Heart right ventricle (tissue), 16 donors: ENCODE measurements at regions of chr6 and their contacts with region 1.

Region 1: DNA sequence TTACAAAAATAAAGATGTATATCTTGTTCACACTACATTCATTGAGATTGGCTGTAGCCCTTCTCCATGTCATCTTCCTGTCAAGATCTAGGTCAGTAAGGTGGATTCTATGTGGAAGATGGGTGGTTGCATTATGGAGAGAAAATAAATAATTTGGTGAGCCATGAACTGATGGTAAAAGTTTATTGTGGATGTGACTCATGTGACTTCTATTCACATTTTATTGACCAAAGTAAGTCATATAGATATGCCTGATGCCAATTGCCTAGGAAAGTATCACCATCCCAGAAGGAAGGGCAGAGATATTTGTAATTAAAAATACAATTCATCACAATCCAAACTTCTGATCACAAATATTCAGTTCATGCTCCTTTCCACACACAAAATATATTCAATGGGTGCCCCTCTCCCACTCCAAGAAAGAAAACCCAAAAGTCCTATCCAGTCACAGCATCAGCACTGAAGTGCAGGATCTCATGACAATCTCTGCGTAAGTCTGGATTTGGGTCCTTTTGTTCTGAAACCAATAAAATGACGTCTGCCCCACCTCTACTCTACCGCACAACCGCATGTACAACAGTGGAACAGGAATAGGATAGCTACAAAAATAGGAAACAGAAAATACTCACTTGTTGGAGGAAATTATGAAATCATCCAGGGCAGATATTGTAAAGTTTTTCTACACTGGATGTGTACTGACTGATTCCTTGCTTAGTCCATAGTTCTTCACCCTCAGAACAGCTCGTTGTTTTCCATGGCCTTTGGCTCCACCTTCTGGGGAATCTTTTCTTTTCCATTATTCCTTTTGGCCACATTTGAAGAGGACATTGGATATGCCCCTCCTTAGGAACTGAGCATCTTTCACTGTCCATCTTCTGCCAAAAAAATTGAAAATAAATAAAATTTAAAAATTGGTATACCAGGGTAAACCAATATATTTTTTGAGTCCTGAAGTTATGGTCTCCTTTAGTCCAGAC is 16.1 kb upstream of the SLC17A3 start:
- DNase-seq: peak in 1 of 2 donors; percentile 26
- ATAC-seq: peak in 4 of 8 donors; percentile 28 to 69 (median 56)
- H3K4me3 ChIP-seq: no peak overlapping the region
- H3K27ac ChIP-seq: no peak overlapping the region
- H3K4me1 ChIP-seq: no peaks in the 10 kb centered on the region
- H3K27me3 ChIP-seq: peaks cover 0 to 2% (median 0%) of the 10 kb centered on the region in 7 donors
- CTCF ChIP-seq: peak in 8 of 9 donors; percentile 14 to 67 (median 48)

Region 2: DNA sequence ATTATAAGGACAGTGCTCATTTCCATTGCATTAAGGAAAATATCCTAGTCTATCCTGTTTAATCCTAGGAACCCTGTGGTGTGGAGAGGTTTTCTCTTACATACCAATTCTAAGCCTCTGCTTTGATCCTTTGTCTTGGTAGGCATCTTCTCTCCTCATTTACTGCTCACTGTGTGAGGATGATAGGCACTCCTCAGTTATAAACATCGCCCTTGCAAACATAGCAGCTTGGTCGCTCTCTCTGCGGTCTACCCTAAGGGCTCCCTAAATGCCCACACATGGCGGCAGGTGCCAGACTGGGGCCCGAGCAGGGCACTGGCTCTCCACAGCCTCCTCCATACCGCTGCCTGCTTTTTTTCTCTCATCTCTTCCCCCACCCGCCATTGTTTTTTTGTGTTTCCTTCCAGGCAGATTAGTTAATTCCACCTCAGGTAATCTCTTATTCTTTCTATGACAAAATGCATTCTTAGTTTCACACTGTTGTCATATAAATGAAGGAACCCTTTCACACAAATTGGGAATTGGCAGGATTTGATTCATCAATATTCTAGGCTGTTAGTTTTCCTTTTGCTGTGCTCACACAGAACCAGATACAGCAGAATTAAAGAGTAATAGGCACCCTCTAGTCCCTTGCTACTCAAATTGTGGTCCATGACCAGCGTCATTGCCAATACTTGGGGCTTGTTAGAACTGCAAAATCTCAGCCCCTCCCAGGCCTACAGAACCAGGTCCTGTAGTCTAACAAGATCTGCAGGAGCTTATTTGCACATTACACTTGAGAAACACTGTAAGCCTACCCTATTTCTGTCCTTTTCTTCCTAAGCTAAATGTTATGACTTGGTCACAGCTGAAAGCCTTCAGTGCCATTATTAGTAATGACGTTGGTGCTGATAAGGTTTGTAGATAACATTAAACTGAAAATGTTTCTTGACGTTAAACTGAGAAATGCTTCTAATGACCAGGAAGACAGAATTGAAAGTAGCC is 574.7 kb before region 1 on chr6:
- intact Hi-C with region 1: no loop called
- DNase-seq: no peak
- ATAC-seq: peak in 3 of 8 donors; percentile 14 to 58 (median 31)
- H3K4me3 ChIP-seq: no peak overlapping the region
- H3K27ac ChIP-seq: no peak overlapping the region
- H3K4me1 ChIP-seq: peaks cover 0 to 42% (median 20%) of the 10 kb centered on the region in 9 donors
- H3K27me3 ChIP-seq: no peaks in the 10 kb centered on the region
- CTCF ChIP-seq: no peak

Region 3: DNA sequence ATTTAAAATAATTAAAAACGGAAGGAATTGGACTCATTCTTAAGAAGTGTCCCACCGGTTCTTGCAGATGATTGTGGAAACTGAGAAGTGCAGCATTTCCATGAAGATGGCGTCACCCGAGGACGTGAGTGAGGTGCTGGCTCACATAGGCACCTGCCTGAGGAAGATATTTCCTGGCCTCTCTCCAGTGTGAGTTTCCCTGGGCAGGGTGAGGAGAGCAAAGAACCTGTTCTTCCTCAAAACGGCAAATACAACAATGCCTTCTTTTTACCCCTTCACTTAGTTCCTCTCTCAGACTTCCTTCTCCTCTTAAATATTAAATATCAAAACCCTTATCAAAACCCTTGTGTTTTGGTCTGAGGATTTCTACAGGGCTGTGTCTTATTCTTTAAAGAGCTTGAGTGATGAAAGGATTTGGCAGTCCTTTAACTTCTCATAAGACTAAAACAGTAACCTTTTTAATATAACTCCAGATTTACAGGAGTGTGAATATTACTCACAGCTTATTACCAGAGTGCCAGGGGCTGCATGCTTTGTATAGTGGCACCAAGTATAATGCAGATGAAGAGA is 454.7 kb before region 1 on chr6:
- intact Hi-C with region 1: no loop called
- DNase-seq: no peak
- ATAC-seq: no peak
- H3K4me3 ChIP-seq: no peak overlapping the region
- H3K27ac ChIP-seq: no peak overlapping the region
- H3K4me1 ChIP-seq: peaks cover 0 to 5% (median 0%) of the 10 kb centered on the region in 9 donors
- H3K27me3 ChIP-seq: no peaks in the 10 kb centered on the region
- CTCF ChIP-seq: no peak

Region 4: GRCh38 chr6:25717866-25718740 is 172.1 kb before region 1 on chr6:
- intact Hi-C with region 1: loop called in 3 of 10 experiments (anchors 5 kb)
- DNase-seq: no peak
- ATAC-seq: no peak
- H3K4me3 ChIP-seq: no peak overlapping the region
- H3K27ac ChIP-seq: no peak overlapping the region
- H3K4me1 ChIP-seq: no peaks in the 10 kb centered on the region
- H3K27me3 ChIP-seq: peaks cover 0 to 24% (median 0%) of the 10 kb centered on the region in 7 donors
- CTCF ChIP-seq: peak in 8 of 9 donors; percentile 13 to 67 (median 54)

Region 5: DNA sequence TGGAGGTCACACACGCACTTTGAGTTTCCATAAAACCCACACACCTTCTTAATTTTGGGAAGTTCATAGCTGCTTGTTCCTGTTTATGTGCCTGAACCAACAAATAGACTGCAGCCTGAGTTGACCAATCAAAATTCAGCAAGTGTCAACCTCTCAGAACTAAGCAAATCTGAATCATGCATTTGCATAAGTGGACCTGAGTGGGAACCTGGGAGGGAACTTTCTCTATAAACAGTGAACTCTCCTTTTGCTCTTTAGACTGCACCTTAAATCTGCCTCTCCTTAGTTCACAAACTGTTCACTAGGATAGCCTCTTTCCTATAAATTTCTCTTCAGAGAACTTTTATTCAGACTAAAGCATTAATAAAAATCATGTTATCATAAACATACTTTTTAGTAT is 96.2 kb before region 1 on chr6:
- intact Hi-C with region 1: loop called in 2 of 10 experiments (anchors 5 to 10 kb)
- DNase-seq: no peak
- ATAC-seq: no peak
- H3K4me3 ChIP-seq: no peak overlapping the region
- H3K27ac ChIP-seq: no peak overlapping the region
- H3K4me1 ChIP-seq: no peaks in the 10 kb centered on the region
- H3K27me3 ChIP-seq: no peaks in the 10 kb centered on the region
- CTCF ChIP-seq: no peak

Region 6: DNA sequence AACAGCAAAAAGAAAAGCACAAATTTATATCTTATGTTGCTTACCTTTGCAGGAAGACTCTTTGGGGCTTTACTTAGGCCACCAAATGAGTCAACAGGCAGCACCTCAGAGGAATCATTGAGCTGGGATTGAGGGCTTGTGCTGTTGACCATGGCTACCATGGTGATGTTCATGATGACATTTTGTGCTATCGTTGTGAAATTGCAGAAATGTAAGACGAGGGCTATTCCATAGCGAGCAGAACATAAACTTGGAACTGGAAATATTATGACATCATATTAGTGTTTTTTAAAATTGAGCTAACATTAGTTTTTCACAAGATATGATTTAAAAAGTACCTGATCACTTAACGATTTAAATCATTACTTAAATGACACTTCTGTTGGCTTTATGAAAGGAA is 28.0 kb before region 1 on chr6:
- intact Hi-C with region 1: no loop called
- DNase-seq: no peak
- ATAC-seq: no peak
- H3K4me3 ChIP-seq: no peak overlapping the region
- H3K27ac ChIP-seq: no peak overlapping the region
- H3K4me1 ChIP-seq: no peaks in the 10 kb centered on the region
- H3K27me3 ChIP-seq: peaks cover 0 to 18% (median 5%) of the 10 kb centered on the region in 7 donors
- CTCF ChIP-seq: no peak